Heart right ventricle (tissue), 16 donors: ENCODE measurements at regions of chr1 and their contacts with region 1.

Region 1: GRCh38 chr1:68358439-68358838 is 91.3 kb downstream of the RPE65 start:
- DNase-seq: peak in 1 of 2 donors; percentile 33
- ATAC-seq: peak in 7 of 8 donors; percentile 11 to 70 (median 54)
- H3K4me3 ChIP-seq: no peak overlapping the region
- H3K27ac ChIP-seq: peak overlapping the region in 6 of 10 donors; percentile 14 to 56 (median 30)
- H3K4me1 ChIP-seq: peaks cover 0 to 27% (median 10%) of the 10 kb centered on the region in 9 donors
- H3K27me3 ChIP-seq: no peaks in the 10 kb centered on the region
- CTCF ChIP-seq: no peak

Region 2: GRCh38 chr1:67970088-67970487 is 388.4 kb before region 1 on chr1:
- intact Hi-C with region 1: no loop called
- DNase-seq: no peak
- ATAC-seq: no peak
- H3K4me3 ChIP-seq: no peak overlapping the region
- H3K27ac ChIP-seq: no peak overlapping the region
- H3K4me1 ChIP-seq: no peaks in the 10 kb centered on the region
- H3K27me3 ChIP-seq: no peaks in the 10 kb centered on the region
- CTCF ChIP-seq: no peak

Region 3: DNA sequence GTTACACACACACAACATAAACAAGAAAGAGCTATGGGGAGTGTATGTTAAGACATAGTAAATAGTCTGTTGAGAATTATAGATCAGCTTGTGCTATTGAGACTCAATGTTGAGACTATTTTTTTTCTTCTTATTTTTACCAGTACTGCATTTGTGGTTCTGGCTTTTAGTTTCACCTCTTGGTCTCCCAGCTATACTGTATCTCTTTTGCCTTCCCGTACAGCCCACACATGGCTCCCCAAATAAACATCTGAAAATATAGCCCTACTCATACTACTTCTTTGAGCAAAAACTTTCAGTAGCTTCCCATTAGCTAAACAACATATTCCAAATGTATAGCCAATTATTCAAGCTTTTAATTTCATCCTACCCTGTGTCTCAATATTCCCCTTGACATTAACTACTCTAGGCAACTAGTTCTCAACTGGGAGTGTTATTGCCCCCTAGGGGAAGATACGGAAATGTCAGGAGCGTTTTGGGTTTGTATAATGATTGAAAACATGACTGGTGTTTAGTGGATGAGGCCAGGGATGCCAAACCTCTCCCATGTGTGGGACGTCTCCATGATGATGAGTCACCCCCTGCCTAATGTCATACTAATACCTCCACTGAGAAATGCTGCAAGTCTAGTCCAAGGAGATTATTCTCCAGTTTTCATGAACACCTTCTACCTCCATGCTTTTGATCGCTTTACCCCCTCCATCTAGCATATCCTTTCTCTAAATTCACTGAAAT is 84.5 kb after region 1 on chr1:
- intact Hi-C with region 1: loop called in 1 of 10 experiments (anchors 10 kb)
- DNase-seq: peak in 1 of 2 donors; percentile 32
- ATAC-seq: peak in 5 of 8 donors; percentile 23 to 63 (median 52)
- H3K4me3 ChIP-seq: no peak overlapping the region
- H3K27ac ChIP-seq: no peak overlapping the region
- H3K4me1 ChIP-seq: no peaks in the 10 kb centered on the region
- H3K27me3 ChIP-seq: no peaks in the 10 kb centered on the region
- CTCF ChIP-seq: peak; percentile 19 to 63 (median 56)